ENCODE measurements at regions of chr11 and their contacts with region 1.

Region 1: DNA sequence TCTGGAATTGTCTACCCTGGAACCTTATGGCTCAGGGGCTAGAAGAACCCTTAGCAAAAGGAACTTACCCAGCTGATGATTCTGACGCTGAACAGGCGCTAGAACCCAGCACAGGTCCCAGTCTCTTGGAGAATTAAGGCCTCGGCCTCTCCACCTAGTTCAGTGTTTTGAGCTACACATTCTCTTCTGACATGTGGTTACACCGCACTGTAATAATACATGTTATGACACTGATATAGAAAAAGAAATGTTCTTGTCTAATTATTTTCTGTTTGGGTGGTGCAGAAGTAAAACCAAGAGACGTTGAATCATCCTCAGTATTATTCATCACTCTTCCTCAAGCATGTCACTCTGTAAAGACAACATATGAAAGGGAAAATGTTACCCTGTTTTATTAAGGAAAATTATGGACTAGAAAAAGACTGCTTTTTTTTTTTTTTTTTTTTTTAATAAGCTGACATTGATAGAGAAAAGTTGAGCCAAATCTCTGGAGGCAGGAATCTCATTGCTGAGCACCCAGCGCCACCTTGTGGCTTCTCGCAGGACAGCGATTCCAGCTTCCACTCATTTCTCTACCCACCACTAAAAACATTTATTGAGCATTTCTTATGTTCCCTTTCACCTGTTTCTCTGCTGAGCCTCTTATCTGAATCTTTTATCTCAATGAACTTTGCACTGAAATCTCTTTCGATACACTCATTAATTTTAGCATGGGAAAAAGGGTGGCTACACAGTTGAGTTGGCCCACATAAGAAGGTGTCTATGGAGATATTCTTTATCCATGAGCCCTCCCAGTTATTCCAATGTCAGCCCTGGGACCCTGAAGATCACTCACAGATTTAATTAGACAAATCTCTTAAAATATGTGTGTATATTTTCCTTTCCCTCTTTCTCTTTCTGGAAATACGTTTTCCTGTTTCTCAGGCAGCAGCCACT is 12.6 kb upstream of the APLNR start:
- DNase-seq: peak; percentile 40 to 82
- ATAC-seq: peak; percentile 87

Region 2: GRCh38 chr11:56841210-56841810 is 408.3 kb before region 1 on chr11:
- intact Hi-C with region 1: loop called (anchors 2 to 10 kb)
- DNase-seq: peak in 1 of 2 donors; percentile 52
- ATAC-seq: peak; percentile 91

Region 3: GRCh38 chr11:57116654-57117053 is 133.0 kb before region 1 on chr11:
- intact Hi-C with region 1: loop called in 1 of 2 experiments (anchors 5 kb)
- DNase-seq: peak in 1 of 2 donors; percentile 39
- ATAC-seq: peak; percentile 75

Region 4: GRCh38 chr11:57131080-57131790 is 118.4 kb before region 1 on chr11:
- intact Hi-C with region 1: loop called in 1 of 2 experiments (anchors 5 kb)
- DNase-seq: peak in 1 of 2 donors; percentile 18
- ATAC-seq: peak; percentile 83